ENCODE measurements at regions of chr1 and their contacts with region 1.

Region 1: DNA sequence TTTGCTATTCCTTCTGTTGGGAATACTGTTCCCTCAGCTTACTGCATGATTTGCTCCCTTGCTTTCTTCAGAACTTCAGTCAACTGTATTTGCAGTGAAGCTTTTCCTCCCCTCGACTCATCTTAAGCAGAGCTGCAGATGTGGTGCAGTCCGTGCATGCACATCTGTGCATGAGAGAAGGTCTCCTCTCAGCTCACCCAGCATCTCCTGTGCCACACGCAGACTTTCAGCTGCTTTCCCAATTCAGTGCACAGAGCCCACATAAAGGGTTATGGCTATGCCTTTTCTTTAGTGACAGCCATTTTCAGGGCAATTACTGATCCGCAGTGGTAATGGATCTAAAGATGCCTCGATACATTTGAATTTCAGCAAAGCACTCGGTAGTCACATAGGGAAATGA is 13.5 kb upstream of the NTPCR start:
- DNase-seq: no peak
- H3K4me3 ChIP-seq: no peak overlapping the region
- H3K27ac ChIP-seq: no peak overlapping the region
- H3K4me1 ChIP-seq: no peaks in the 10 kb centered on the region
- H3K27me3 ChIP-seq: peaks cover 0 to 2% (median 0%) of the 10 kb centered on the region in 4 experiments; a peak in 1 of 7 replicates
- CTCF ChIP-seq: no peak
- EP300 ChIP-seq: no peak
- POLR2A ChIP-seq: no peak
- RAD21 ChIP-seq: no peak

Region 2: GRCh38 chr1:232950197-232951176 is 13.5 kb after region 1 on chr1 and contains the start of gene NTPCR:
- CTCF ChIA-PET with region 1: interaction called, 16 read pairs
- POLR2A ChIA-PET with region 1: no interaction called
- DNase-seq: peak; percentile 88 to 99
- H3K4me3 ChIP-seq: peak within 1 kb of the TSS; percentile 75 to 94 (median 88)
- H3K27ac ChIP-seq: peak within 1 kb of the TSS; percentile 86
- H3K4me1 ChIP-seq: peaks cover 2 to 20% (median 10%) of the 10 kb centered on the region in 4 experiments; a peak in 5 of 7 replicates
- H3K27me3 ChIP-seq: no peaks in the 10 kb centered on the region
- CTCF ChIP-seq: no peak
- EP300 ChIP-seq: no peak
- POLR2A ChIP-seq: peak in 1 of 2 experiments; percentile 86; a peak in 2 of 3 replicates
- RAD21 ChIP-seq: peak in 1 of 2 experiments; percentile 3; a peak in 1 of 4 replicates
- total RNA-seq, gene NTPCR: 68.6 and 73.1 TPM in 2 replicates

Measured in H1 (cell line).